PC-3 (cell line): ENCODE measurements at regions of chr5 and their contacts with region 1.

Region 1: DNA sequence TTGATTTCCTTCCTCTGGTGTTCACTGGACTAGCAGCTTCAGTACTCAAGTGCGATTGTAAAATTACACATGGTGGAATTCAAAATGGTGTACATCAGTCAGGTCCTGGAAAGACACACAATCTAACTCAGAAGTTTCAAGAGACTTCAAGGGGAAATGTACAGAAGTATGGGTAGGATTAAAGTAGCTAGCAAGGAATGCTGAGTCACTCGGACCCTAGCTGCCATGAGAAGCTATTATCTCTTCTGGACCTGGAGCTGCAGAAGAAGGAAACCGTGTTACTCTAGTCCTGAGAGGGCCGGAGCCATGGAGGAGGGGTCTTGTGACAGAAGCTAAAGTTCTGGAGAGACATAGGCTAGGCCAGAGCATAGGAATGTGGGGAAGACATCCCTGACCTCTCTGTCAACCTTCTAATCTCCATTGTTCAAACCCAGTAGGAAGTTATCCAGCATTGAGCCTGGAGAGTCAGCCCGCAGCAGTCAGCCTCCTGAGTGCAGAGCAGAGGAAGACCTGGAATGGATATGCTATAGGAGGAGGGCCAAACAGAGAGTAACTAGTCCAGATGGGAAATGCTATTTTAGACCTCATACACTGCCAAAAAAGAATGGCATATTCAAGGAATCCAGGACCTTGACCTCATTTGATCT is 84.3 kb downstream of the GHR start:
- DNase-seq: no peak
- ATAC-seq: no peak
- H3K4me3 ChIP-seq: no peak overlapping the region
- H3K27ac ChIP-seq: no peak overlapping the region
- H3K4me1 ChIP-seq: peaks cover 6% of the 10 kb centered on the region
- H3K27me3 ChIP-seq: no peaks in the 10 kb centered on the region
- CTCF ChIP-seq: no peak

Region 2: GRCh38 chr5:41967852-41968719 is 539.5 kb before region 1 on chr5:
- CTCF ChIA-PET with region 1: no interaction called
- POLR2A ChIA-PET with region 1: no interaction called
- intact Hi-C with region 1: no loop called
- DNase-seq: no peak
- ATAC-seq: no peak
- H3K4me3 ChIP-seq: no peak overlapping the region
- H3K27ac ChIP-seq: no peak overlapping the region
- H3K4me1 ChIP-seq: no peaks in the 10 kb centered on the region
- H3K27me3 ChIP-seq: no peaks in the 10 kb centered on the region
- CTCF ChIP-seq: peak; percentile 63

Region 3: DNA sequence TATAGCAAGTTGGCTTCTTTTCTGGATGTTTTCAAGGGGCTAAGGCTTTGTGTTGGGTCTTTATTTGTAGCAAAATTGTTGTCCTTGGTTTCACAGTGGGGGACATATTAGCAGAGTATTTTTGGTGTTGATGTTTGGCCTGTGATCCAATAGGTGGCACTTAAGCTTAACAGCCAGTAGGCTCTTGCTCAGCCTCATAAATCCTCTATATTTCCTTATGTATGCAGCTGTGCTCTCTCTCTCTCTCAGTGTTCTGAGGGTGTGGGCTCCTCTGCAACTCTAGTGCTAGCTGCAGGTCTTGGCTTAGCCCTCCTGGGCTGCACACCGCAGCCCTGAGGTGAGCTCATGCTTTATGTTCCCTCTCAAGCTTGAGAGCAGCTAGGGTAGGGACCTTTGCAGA is 279.3 kb before region 1 on chr5:
- CTCF ChIA-PET with region 1: no interaction called
- POLR2A ChIA-PET with region 1: no interaction called
- intact Hi-C with region 1: loop called (anchors 10 kb)
- DNase-seq: peak; percentile 69
- ATAC-seq: peak; percentile 98
- H3K4me3 ChIP-seq: no peak overlapping the region
- H3K27ac ChIP-seq: no peak overlapping the region
- H3K4me1 ChIP-seq: peaks cover 5% of the 10 kb centered on the region; the same call in 1 of the 2 replicates
- H3K27me3 ChIP-seq: no peaks in the 10 kb centered on the region
- CTCF ChIP-seq: peak; percentile 78

Region 4: GRCh38 chr5:42360056-42360455 is 147.5 kb before region 1 on chr5:
- CTCF ChIA-PET with region 1: no interaction called
- POLR2A ChIA-PET with region 1: no interaction called
- intact Hi-C with region 1: loop called (anchors 10 kb)
- DNase-seq: peak; percentile 95
- ATAC-seq: peak; percentile 93
- H3K4me3 ChIP-seq: peak overlapping the region; percentile 4; the same call in 1 of the 2 replicates
- H3K27ac ChIP-seq: peak overlapping the region; percentile 86
- H3K4me1 ChIP-seq: peaks cover 26% of the 10 kb centered on the region
- H3K27me3 ChIP-seq: no peaks in the 10 kb centered on the region
- CTCF ChIP-seq: no peak

Region 5: GRCh38 chr5:42436051-42436450 is 71.5 kb before region 1 on chr5:
- CTCF ChIA-PET with region 1: no interaction called
- POLR2A ChIA-PET with region 1: no interaction called
- intact Hi-C with region 1: loop called (anchors 5 kb)
- DNase-seq: no peak
- ATAC-seq: no peak
- H3K4me3 ChIP-seq: no peak overlapping the region
- H3K27ac ChIP-seq: no peak overlapping the region
- H3K4me1 ChIP-seq: peaks cover 8% of the 10 kb centered on the region
- H3K27me3 ChIP-seq: no peaks in the 10 kb centered on the region
- CTCF ChIP-seq: no peak